Activated CD8-positive, alpha-beta T cell treated with anti-CD3 and anti-CD28 coated beads for 36 hours (primary cell): ENCODE measurements at regions of chr3 and their contacts with region 1.

Region 1: DNA sequence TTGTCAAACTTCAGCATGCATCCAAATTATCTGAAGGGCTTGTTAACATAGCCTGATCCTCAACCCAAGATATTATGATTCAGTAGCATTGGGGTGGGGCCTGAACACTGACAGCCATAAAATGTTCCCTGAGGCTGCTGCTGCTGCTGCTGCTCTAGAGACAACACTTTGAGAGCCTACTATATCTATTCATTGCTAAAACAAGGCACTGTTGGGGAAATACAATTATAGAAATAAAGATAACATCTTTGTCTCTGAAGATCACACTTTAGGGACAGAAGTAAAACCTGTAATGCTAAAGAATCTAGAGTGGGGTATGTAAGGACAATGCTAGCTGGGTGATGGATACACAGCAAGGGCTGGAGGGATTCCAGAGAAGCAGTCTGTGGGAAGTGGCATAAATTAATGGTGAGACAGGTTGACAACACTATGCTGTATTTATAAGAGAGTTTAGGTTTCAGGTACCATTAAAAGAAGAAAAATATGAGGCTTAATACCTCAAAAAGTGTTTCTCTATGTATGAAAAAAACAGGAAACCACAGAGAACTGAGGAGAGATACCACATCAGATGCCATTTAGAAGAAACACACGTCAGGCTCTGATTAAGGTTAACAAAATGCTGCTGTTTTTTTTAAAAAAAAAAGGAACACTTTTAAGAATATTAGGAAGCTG is 115.9 kb downstream of the CBLB start:
- DNase-seq: peak; percentile 67
- ATAC-seq: peak; percentile 78
- H3K4me3 Mint-ChIP-seq: peak overlapping the region; percentile 61
- H3K27ac Mint-ChIP-seq: peak overlapping the region; percentile 99
- H3K4me1 Mint-ChIP-seq: peaks cover 75% of the 10 kb centered on the region
- H3K27me3 Mint-ChIP-seq: no peaks in the 10 kb centered on the region
- CTCF ChIP-seq: no peak

Region 2: DNA sequence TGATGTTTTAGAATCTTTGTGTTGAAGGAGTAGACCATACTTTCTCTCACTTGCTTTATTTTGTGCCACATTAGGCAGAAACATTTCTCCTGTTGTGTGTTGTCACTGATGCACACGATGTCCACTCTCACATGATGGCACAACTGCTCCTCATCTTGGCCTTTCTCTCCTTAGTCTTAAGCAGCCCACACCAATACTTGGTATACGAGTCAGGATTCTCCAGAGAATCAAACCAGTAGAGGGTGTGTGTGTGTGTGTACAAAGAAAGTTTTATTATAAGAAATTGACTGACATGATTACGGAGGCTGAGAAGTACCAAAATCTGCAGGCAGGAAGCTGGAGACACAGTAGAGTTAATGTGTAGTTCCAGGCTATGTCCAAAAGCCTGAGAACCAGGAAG is 199.0 kb before region 1 on chr3:
- CTCF ChIA-PET with region 1: no interaction called
- POLR2A ChIA-PET with region 1: no interaction called
- intact Hi-C with region 1: no loop called
- DNase-seq: no peak
- ATAC-seq: no peak
- H3K4me3 Mint-ChIP-seq: no peak overlapping the region
- H3K27ac Mint-ChIP-seq: no peak overlapping the region
- H3K4me1 Mint-ChIP-seq: no peaks in the 10 kb centered on the region
- H3K27me3 Mint-ChIP-seq: no peaks in the 10 kb centered on the region
- CTCF ChIP-seq: no peak

Region 3: GRCh38 chr3:105764378-105765307 is 11.8 kb after region 1 on chr3:
- CTCF ChIA-PET with region 1: no interaction called
- POLR2A ChIA-PET with region 1: no interaction called
- intact Hi-C with region 1: no loop called
- DNase-seq: no peak
- ATAC-seq: peak; percentile 56
- H3K4me3 Mint-ChIP-seq: peak overlapping the region; percentile 23
- H3K27ac Mint-ChIP-seq: peak overlapping the region; percentile 88
- H3K4me1 Mint-ChIP-seq: peaks cover 79% of the 10 kb centered on the region
- H3K27me3 Mint-ChIP-seq: no peaks in the 10 kb centered on the region
- CTCF ChIP-seq: no peak

Region 4: DNA sequence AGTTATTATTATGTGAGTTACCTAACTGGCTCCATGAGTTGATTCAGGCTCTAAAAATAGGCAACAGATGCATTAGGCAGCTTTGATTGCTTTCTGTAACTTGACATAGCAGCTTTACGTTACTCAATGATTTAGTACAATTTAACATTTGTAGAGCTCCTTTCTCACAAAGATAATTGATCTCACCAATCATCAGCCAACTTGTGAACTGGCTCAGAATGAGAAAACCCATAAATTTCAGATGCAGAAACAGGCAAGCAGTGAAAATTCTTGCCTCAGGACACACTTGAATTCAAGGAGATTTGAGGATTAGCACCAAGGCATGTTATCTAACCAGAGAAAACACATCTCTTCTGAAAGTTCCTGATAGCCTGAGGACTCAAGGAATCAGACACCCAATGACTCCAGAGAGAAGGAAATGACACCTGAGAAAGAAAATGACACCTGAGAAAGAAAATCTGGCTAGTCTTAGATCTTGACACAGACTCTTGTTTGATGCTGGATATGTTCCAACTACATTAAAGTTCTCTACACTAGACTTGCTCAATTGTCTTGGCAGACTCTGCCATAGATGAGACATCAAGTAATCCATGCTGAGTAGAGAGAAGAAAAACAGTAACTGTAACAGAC is 431.0 kb after region 1 on chr3:
- CTCF ChIA-PET with region 1: no interaction called
- POLR2A ChIA-PET with region 1: no interaction called
- intact Hi-C with region 1: loop called (anchors 10 kb)
- DNase-seq: no peak
- ATAC-seq: peak; percentile 40
- H3K4me3 Mint-ChIP-seq: no peak overlapping the region
- H3K27ac Mint-ChIP-seq: peak overlapping the region; percentile 86
- H3K4me1 Mint-ChIP-seq: peaks cover 51% of the 10 kb centered on the region
- H3K27me3 Mint-ChIP-seq: no peaks in the 10 kb centered on the region
- CTCF ChIP-seq: no peak